GM13976 (cell line): ENCODE measurements at regions of chr1 and their contacts with region 1.

Region 1: GRCh38 chr1:6259491-6260425 is 1.1 kb downstream of the GPR153 start:
- DNase-seq: peak; percentile 94
- CTCF ChIP-seq: no peak

Region 2: GRCh38 chr1:5938101-5938646 is 321.6 kb before region 1 on chr1:
- in situ Hi-C with region 1: no loop called
- DNase-seq: no peak
- CTCF ChIP-seq: no peak

Region 3: DNA sequence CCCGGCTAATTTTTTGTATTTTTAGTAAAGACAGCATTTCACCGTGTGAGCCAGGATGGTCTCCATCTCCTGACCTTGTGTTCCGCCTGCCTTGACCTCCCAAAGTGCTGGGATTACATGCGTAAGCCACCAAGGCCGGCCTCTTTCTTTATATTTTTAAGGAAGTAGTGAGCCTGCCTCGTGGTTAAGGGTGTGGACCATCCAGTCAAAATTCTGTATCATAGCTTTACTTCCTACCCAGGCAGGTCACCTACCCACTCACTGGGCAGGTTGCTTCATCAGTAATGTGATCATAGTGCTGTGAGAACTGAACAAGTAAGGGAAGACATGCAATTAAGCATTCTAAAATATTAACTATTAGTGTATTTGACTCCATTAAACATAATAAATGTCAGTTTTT is 141.9 kb after region 1 on chr1:
- in situ Hi-C with region 1: loop called (anchors 10 kb)
- DNase-seq: no peak
- CTCF ChIP-seq: no peak